WTC11 (cell line): ENCODE measurements at regions of chr14 and their contacts with region 1.

Region 1: DNA sequence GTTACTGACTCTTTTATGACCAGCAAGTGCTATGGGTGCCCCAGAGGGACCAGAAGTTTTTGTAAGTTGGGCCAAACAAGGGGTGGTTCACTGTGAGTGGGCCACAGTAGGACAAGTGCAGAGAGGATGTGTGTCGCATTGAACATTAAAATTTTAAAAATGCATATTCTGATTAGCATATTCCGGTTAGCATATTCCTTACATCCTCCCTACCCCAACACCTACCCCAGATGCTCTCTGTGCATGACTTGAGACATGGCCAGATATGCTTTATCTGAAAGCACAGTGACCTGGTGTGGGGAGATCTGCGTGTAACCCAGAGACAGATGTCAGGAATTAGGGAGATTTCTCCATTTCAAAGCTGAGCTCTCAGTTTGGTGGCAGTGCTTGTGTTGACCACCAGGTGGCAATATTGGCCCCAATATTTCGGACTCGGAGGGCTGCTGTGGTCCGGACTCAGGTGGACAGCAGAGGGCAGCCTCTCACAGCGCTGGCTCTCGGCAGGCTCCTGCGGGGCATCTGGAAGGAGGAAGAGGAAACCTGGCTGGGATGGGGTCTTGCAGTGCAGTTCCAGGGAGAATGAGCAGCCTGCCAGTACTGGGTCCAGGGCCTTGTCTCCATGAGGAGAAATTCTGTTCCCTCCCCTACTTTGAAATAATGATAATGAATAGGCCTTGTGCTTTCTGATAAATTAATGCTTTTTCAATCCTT is 1.6 kb upstream of the CEBPE start:
- DNase-seq: peak; percentile 94
- ATAC-seq: peak; percentile 79
- H3K4me3 Mint-ChIP-seq: no peak overlapping the region
- H3K27ac Mint-ChIP-seq: peak overlapping the region; percentile 30; the same call in 1 of the 2 replicates
- H3K4me1 Mint-ChIP-seq: peaks cover 61% of the 10 kb centered on the region
- H3K27me3 Mint-ChIP-seq: peaks cover 4% of the 10 kb centered on the region; the same call in 1 of the 2 replicates
- CTCF ChIP-seq: peak; percentile 98

Region 2: DNA sequence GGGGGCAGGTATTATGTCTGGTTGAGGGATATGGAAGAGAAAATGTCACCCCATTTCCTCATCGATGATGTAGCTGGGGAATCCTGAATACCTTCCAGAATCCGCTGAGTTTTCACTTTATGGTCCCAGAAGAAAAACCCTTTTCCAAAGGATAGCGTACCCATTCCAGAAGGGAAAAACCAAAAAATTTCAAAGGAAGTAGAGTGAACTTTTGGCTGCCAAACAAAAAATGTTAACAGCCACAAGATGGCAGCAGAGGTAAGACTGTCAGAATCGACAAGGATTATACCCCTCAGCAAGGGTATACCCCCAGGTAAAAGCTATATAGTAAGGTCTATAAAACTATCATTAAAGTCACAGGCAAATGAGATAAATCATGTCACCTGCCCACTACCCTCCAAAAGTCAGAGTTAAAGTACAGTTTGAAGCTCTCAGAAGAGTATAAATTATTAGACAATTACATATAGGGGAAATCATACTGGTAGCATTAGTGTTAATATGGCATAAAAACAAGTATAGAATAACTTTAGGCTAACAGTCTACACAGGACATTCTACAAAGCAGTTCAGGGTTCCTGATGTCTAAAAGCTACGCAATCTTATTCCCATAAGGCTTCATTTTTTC is 43.8 kb before region 1 on chr14:
- CTCF ChIA-PET with region 1: interaction called, 12 read pairs
- POLR2A ChIA-PET with region 1: no interaction called
- DNase-seq: no peak
- ATAC-seq: peak; percentile 59
- H3K4me3 Mint-ChIP-seq: no peak overlapping the region
- H3K27ac Mint-ChIP-seq: no peak overlapping the region
- H3K4me1 Mint-ChIP-seq: peaks cover 12% of the 10 kb centered on the region
- H3K27me3 Mint-ChIP-seq: no peaks in the 10 kb centered on the region
- CTCF ChIP-seq: peak; percentile 45

Region 3: GRCh38 chr14:23154964-23155587 is 34.4 kb after region 1 on chr14:
- CTCF ChIA-PET with region 1: interaction called, 49 read pairs
- POLR2A ChIA-PET with region 1: interaction called, 3 read pairs
- DNase-seq: peak; percentile 44
- ATAC-seq: peak; percentile 68
- H3K4me3 Mint-ChIP-seq: peak overlapping the region; percentile 32
- H3K27ac Mint-ChIP-seq: peak overlapping the region; percentile 93
- H3K4me1 Mint-ChIP-seq: peaks cover 58% of the 10 kb centered on the region
- H3K27me3 Mint-ChIP-seq: no peaks in the 10 kb centered on the region
- CTCF ChIP-seq: no peak

Region 4: DNA sequence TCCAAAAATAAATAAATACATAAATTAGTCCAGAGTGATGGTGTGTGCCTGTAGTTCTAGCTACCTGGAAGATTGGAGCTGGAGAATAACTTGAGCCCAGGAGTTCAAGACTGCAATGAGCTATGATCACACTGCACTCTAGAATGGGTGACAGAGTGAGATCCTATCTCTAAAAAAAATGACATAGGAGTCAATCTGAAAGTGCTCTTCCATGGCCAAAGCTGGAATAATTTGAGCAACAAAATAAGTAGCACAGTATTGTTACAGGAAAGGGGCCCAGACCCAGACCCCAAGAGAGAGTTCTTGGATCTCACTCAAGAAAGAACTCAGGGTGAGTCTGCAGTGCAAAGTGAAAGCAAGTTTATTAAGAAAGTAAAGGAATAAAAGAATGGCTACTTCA is 87.6 kb after region 1 on chr14:
- CTCF ChIA-PET with region 1: interaction called, 34 read pairs
- POLR2A ChIA-PET with region 1: no interaction called
- DNase-seq: no peak
- ATAC-seq: no peak
- H3K4me3 Mint-ChIP-seq: no peak overlapping the region
- H3K27ac Mint-ChIP-seq: 0 out of 2 replicates have a peak overlapping the region, but pooled peaks have one; percentile 34
- H3K4me1 Mint-ChIP-seq: peaks cover 42% of the 10 kb centered on the region
- H3K27me3 Mint-ChIP-seq: no peaks in the 10 kb centered on the region
- CTCF ChIP-seq: no peak

Region 5: DNA sequence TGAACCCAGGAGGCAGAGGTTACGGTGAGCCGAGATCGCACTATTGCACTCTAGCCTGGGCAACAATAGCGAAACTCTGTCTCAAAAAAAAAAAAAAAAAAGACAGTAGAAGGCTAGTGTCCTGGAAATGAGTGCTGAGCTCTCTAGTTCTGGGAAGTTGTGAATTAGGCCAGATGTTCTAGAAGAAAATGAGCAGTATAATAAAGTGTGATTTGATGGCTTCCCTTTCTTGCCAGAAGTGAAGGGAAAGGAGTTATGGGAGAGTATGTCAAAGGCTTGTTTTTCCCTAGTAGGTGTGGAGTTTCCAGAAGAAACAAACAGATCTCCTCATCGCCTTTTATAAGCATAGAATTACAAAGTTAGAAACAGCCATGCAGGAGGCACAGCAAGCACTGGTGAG is 137.6 kb after region 1 on chr14:
- CTCF ChIA-PET with region 1: interaction called, 17 read pairs
- POLR2A ChIA-PET with region 1: interaction called, 3 read pairs
- DNase-seq: no peak
- ATAC-seq: no peak
- H3K4me3 Mint-ChIP-seq: no peak overlapping the region
- H3K27ac Mint-ChIP-seq: peak overlapping the region; percentile 68
- H3K4me1 Mint-ChIP-seq: peaks cover 23% of the 10 kb centered on the region
- H3K27me3 Mint-ChIP-seq: peaks cover 11% of the 10 kb centered on the region
- CTCF ChIP-seq: no peak

Region 6: GRCh38 chr14:23306410-23307145 is 185.9 kb after region 1 on chr14 and contains the start of gene BCL2L2:
- CTCF ChIA-PET with region 1: interaction called, 26 read pairs
- POLR2A ChIA-PET with region 1: interaction called, 7 read pairs
- DNase-seq: peak; percentile 94
- ATAC-seq: peak; percentile 69
- H3K4me3 Mint-ChIP-seq: peak within 1 kb of the TSS; percentile 87
- H3K27ac Mint-ChIP-seq: peak within 1 kb of the TSS; percentile 93
- H3K4me1 Mint-ChIP-seq: peaks cover 20% of the 10 kb centered on the region
- H3K27me3 Mint-ChIP-seq: peaks cover 18% of the 10 kb centered on the region
- CTCF ChIP-seq: no peak
- total RNA-seq, gene BCL2L2: 15.5 to 18.2 TPM (median 16.9 TPM) in 3 replicates

Region 7: GRCh38 chr14:23339506-23340268 is 219.0 kb after region 1 on chr14:
- CTCF ChIA-PET with region 1: no interaction called
- POLR2A ChIA-PET with region 1: no interaction called
- DNase-seq: no peak
- ATAC-seq: no peak
- H3K4me3 Mint-ChIP-seq: no peak overlapping the region
- H3K27ac Mint-ChIP-seq: no peak overlapping the region
- H3K4me1 Mint-ChIP-seq: 0 out of 2 replicates have a peak, but pooled peaks cover 4% of the 10 kb centered on the region
- H3K27me3 Mint-ChIP-seq: peaks cover 48% of the 10 kb centered on the region
- CTCF ChIP-seq: no peak

Region 8: GRCh38 chr14:23379366-23380196 is 258.9 kb after region 1 on chr14:
- CTCF ChIA-PET with region 1: interaction called, 16 read pairs
- POLR2A ChIA-PET with region 1: no interaction called
- DNase-seq: peak; percentile 76
- ATAC-seq: peak; percentile 63
- H3K4me3 Mint-ChIP-seq: no peak overlapping the region
- H3K27ac Mint-ChIP-seq: no peak overlapping the region
- H3K4me1 Mint-ChIP-seq: peaks cover 11% of the 10 kb centered on the region
- H3K27me3 Mint-ChIP-seq: peaks cover 59% of the 10 kb centered on the region
- CTCF ChIP-seq: peak; percentile 93